ENCODE measurements at regions of chr14 and their contacts with region 1.

Region 1: GRCh38 chr14:95442633-95443021 is 73.8 kb downstream of the SYNE3 start:
- DNase-seq: peak; percentile 66
- ATAC-seq: peak; percentile 90
- H3K4me3 ChIP-seq: no peak overlapping the region
- H3K27ac ChIP-seq: peak overlapping the region; percentile 80
- H3K4me1 ChIP-seq: peaks cover 45% of the 10 kb centered on the region
- H3K27me3 ChIP-seq: no peaks in the 10 kb centered on the region
- CTCF ChIP-seq: peak; percentile 95
- EP300 ChIP-seq: no peak
- POLR2A ChIP-seq: no peak
- RAD21 ChIP-seq: peak; percentile 91

Region 2: GRCh38 chr14:95490727-95491451 is 48.3 kb after region 1 on chr14:
- CTCF ChIA-PET with region 1: no interaction called
- POLR2A ChIA-PET with region 1: no interaction called
- in situ Hi-C with region 1: no loop called
- intact Hi-C with region 1: no loop called
- DNase-seq: no peak
- ATAC-seq: no peak; the same call in 2 of the 3 replicates
- H3K4me3 ChIP-seq: no peak overlapping the region
- H3K27ac ChIP-seq: peak overlapping the region; percentile 16
- H3K4me1 ChIP-seq: peaks cover 48% of the 10 kb centered on the region
- H3K27me3 ChIP-seq: no peaks in the 10 kb centered on the region
- CTCF ChIP-seq: no peak
- EP300 ChIP-seq: no peak
- POLR2A ChIP-seq: no peak
- RAD21 ChIP-seq: no peak

Region 3: DNA sequence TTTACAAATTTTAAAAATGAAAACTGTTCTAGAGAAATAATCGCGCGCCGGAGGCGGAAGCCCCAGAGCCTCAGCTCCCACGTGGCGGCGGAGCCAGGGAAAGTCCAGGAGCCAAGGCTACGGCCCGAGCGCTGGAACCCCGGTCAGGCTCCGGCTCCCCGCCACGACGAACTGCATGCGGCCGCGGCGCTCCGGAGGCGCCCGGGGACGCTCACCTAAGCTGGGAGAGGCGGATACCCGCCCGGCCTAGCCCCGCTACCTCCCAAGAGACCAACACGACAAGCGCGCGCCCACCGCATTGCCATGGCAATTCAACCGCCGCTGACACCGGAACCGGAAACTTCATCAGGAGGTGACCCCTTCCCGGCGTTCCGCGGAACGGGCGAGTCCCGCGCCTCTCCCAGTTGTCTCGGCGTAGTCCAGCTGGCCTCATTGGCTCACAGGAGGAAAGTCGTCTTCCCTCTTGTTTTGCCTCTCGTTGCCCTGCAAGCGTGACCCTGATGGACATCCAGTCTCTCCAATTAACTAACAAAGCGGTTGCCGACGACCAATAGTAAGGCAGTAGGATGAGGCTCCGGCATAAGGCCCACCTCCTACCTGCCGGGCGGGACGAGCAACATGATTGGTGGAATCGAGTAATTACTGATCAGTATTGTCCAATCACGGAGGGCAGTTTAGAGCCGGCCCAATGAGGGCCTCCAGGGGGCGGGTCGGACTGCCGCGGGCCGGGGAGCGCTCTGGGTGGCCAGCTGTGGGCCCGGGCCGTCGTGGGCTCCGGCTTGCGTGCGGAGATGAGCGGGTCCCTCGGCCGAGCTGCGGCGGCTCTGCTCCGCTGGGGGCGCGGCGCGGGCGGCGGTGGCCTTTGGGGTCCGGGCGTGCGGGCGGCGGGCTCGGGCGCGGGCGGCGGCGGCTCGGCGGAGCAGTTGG is 91.9 kb after region 1 on chr14 and contains the start of gene GLRX5:
- CTCF ChIA-PET with region 1: no interaction called
- POLR2A ChIA-PET with region 1: interaction called, 29 read pairs
- in situ Hi-C with region 1: loop called (anchors 5 kb)
- intact Hi-C with region 1: no loop called
- DNase-seq: peak; percentile 100
- ATAC-seq: peak; percentile 93
- H3K4me3 ChIP-seq: peak within 1 kb of the TSS; percentile 84 to 96 (median 88)
- H3K27ac ChIP-seq: peak within 1 kb of the TSS; percentile 87
- H3K4me1 ChIP-seq: peaks cover 49% of the 10 kb centered on the region
- H3K27me3 ChIP-seq: peaks cover 0 to 2% of the 10 kb centered on the region in 2 experiments; a peak in 1 of 5 replicates
- CTCF ChIP-seq: no peak
- EP300 ChIP-seq: peak in 1 of 2 experiments; percentile 13; a peak in 2 of 4 replicates
- POLR2A ChIP-seq: peak; percentile 62 to 74
- RAD21 ChIP-seq: peak; percentile 35; the same call in 1 of the 2 replicates
- total RNA-seq, gene GLRX5: 115 and 122 TPM in 2 replicates

Region 4: GRCh38 chr14:95545179-95546168 is 102.8 kb after region 1 on chr14:
- CTCF ChIA-PET with region 1: interaction called, 5 read pairs
- POLR2A ChIA-PET with region 1: interaction called, 17 read pairs
- in situ Hi-C with region 1: no loop called
- intact Hi-C with region 1: no loop called
- DNase-seq: no peak
- ATAC-seq: no peak
- H3K4me3 ChIP-seq: no peak overlapping the region
- H3K27ac ChIP-seq: no peak overlapping the region
- H3K4me1 ChIP-seq: peaks cover 75% of the 10 kb centered on the region
- H3K27me3 ChIP-seq: no peaks in the 10 kb centered on the region
- CTCF ChIP-seq: no peak
- EP300 ChIP-seq: no peak
- POLR2A ChIP-seq: no peak
- RAD21 ChIP-seq: no peak